Activated CD4-positive, alpha-beta T cell treated with anti-CD3 and anti-CD28 coated beads for 36 hours (primary cell): ENCODE measurements at regions of chr6 and their contacts with region 1.

Region 1: DNA sequence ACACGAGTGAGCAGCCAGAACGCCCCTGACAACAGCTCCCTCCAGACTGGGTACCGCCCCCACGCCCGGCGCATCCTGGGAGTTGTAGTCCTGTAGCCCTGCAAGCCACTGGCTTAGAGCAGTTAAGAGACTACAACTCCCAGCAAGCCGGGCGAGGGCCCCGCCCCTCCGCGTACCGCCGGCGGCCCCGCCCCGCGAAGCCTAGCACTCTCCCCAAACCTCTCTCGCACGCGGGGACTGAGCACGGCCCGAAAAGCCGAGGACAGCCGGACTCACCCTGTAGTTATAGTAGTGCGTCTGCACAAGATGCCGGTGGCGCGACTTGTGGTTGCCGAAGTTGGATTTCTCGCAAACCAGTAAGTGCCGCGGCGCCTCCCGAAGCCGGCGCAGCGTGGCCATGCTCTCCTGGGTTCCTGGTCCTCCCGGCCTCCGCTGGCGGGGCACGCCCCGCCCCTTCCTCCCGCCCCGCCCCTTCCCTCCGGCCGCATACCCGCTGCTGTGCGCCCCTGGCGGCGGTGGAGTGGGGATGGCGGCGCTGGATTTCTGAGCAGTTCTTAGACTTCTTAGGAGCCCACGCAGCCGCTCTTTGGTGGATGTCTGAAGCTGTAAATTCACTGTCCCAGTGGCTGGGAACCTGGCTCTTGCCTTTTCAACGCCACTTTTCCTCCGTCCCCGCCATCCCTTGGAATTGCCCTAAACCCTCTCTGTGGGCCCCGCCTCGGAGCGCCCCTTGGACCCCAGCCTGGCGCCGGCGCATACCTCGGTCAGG is at the start of gene RPP40:
- DNase-seq: peak; percentile 99
- ATAC-seq: peak; percentile 97
- H3K4me3 Mint-ChIP-seq: peak within 1 kb of the TSS; percentile 87
- H3K27ac Mint-ChIP-seq: peak within 1 kb of the TSS; percentile 94
- H3K4me1 Mint-ChIP-seq: peaks cover 8% of the 10 kb centered on the region
- H3K27me3 Mint-ChIP-seq: no peaks in the 10 kb centered on the region
- total RNA-seq, gene RPP40: 7.7 to 11.2 TPM

Region 2: DNA sequence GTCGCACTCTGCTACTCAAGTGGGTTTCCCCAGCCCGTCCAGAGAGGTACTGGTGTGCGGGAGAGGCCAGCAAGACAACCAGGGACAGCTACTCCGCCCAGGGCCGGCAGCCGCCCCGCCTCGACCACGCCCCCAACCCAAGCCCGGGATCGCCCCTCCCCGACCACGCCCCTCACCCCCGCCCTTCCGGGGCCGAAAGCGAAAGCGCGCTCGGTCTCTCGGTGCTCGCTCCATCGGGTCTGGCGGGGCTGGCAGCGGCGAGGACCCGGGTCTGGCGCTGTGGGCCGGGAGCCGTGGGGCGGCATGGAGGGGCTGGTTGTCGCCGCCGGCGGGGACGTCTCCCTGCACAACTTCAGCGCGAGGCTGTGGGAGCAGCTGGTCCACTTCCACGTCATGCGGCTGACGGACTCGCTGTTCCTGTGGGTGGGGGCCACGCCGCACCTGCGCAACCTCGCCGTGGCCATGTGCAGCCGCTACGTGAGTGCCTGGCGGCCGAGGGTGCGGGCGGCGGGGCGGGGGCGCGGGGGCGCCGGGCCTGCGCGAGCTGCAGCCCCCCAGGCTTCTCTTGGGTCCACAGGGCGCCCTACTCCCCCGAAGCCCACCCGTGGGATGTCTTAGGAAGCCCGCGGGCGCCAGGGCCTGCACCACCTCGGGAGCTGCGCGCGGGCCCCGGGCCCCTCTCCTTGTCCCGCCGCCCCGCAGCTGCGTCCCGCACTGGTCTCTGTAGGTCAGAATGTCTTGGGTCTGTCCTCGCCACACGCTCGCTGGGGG is 1744.9 kb before region 1 on chr6 and contains the start of gene PSMG4:
- CTCF ChIA-PET with region 1: no interaction called
- POLR2A ChIA-PET with region 1: no interaction called
- intact Hi-C with region 1: loop called in 1 of 2 experiments (anchors 5 kb)
- DNase-seq: peak; percentile 97
- ATAC-seq: peak; percentile 83
- H3K4me3 Mint-ChIP-seq: peak within 1 kb of the TSS; percentile 89
- H3K27ac Mint-ChIP-seq: peak within 1 kb of the TSS; percentile 92
- H3K4me1 Mint-ChIP-seq: peaks cover 35% of the 10 kb centered on the region
- H3K27me3 Mint-ChIP-seq: peaks cover 3% of the 10 kb centered on the region
- total RNA-seq, gene PSMG4: 22.2 to 23.2 TPM

Region 3: GRCh38 chr6:4637691-4638433 is 365.9 kb before region 1 on chr6:
- CTCF ChIA-PET with region 1: no interaction called
- POLR2A ChIA-PET with region 1: no interaction called
- intact Hi-C with region 1: loop called in 1 of 2 experiments (anchors 1 kb)
- DNase-seq: peak; percentile 69
- ATAC-seq: peak; percentile 99
- H3K4me3 Mint-ChIP-seq: no peak overlapping the region
- H3K27ac Mint-ChIP-seq: peak overlapping the region; percentile 78
- H3K4me1 Mint-ChIP-seq: peaks cover 27% of the 10 kb centered on the region
- H3K27me3 Mint-ChIP-seq: peaks cover 33% of the 10 kb centered on the region

Region 4: GRCh38 chr6:4693173-4693970 is 310.4 kb before region 1 on chr6:
- CTCF ChIA-PET with region 1: no interaction called
- POLR2A ChIA-PET with region 1: no interaction called
- intact Hi-C with region 1: no loop called
- DNase-seq: no peak
- ATAC-seq: no peak
- H3K4me3 Mint-ChIP-seq: no peak overlapping the region
- H3K27ac Mint-ChIP-seq: no peak overlapping the region
- H3K4me1 Mint-ChIP-seq: no peaks in the 10 kb centered on the region
- H3K27me3 Mint-ChIP-seq: peaks cover 29% of the 10 kb centered on the region

Region 5: DNA sequence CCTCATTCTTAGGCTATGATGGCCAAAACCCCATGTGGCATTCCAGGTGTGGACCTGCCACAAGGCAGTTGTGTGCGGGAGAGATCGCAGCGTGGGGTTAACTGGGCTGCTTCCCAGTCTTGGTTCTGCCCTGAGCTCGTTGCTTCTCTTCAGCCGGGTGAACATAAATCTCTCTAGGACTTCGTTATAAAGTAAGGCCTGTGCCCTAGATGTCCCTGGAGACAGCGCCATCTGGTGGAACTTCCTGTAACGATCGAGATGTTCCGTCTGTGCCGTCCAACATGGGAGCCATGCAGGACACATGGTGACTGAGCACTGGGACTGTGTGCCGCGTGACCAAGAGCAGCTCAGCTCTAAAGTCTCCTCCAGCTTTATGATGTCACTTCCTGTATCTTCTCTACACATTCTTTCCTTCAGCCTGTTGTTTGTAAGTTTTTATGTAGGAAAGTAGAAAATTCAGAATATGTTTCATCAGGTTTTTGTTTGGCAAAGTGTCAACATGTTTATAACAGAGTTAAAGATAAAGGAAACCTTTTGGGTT is 26.9 kb after region 1 on chr6:
- CTCF ChIA-PET with region 1: interaction called, 5 read pairs
- POLR2A ChIA-PET with region 1: no interaction called
- intact Hi-C with region 1: loop called (anchors 1 kb)
- DNase-seq: peak; percentile 92
- ATAC-seq: peak; percentile 98
- H3K4me3 Mint-ChIP-seq: no peak overlapping the region
- H3K27ac Mint-ChIP-seq: peak overlapping the region; percentile 76
- H3K4me1 Mint-ChIP-seq: peaks cover 15% of the 10 kb centered on the region
- H3K27me3 Mint-ChIP-seq: peaks cover 4% of the 10 kb centered on the region

Region 6: DNA sequence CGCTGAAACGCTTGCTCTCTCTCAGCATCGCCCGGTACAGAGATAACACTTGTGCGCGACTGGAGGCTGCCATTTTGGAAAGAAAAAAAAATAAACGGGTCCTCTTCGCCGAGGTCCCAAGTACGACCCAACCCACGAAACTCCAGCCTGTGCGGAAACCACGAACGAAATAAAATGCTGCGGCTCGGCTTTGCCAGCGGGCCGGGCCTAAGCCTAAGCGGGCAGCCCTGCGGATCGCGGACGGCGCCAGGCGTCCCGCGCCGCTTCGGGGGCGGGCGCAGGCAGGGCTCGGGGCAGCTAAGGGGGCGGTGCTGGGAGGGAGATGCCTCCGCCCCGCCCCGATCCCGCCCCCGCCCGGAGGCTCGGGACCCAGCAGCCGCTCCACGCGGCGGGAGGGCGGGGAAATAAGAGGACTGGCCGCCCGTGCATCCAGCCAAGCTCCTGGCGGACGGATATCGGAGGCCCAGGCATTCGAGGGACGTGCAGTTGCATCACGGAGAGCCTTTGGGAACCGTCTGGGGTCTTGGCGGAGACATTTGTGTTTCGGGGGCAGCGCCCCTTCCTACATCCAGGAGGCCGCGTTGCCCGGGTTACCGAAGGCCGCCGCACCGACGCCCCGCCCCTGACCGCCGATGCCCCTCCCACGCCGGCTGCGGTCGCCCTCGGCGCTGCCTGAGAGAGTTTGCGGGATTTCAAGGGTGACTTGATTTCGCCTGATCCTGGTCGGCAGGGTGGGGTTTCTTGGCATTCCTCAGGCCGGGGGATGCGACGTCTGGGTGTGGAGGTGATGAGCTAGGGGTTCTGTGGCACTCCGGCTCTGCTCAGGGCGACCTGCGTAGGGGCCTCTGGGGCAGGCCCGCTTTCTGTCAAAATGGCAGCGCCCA is 257.1 kb after region 1 on chr6 and contains the starts of genes FARS2 and LYRM4:
- CTCF ChIA-PET with region 1: interaction called, 3 read pairs
- POLR2A ChIA-PET with region 1: no interaction called
- intact Hi-C with region 1: loop called (anchors 1 to 5 kb)
- DNase-seq: peak; percentile 94
- ATAC-seq: peak; percentile 80
- H3K4me3 Mint-ChIP-seq: peak within 1 kb of the TSS; percentile 92
- H3K27ac Mint-ChIP-seq: peak within 1 kb of the TSS; percentile 97
- H3K4me1 Mint-ChIP-seq: peaks cover 36% of the 10 kb centered on the region
- H3K27me3 Mint-ChIP-seq: no peaks in the 10 kb centered on the region
- total RNA-seq, gene FARS2: 17.6 to 18.4 TPM
- total RNA-seq, gene LYRM4: 46.4 to 53.4 TPM